ENCODE measurements at regions of chr12 and their contacts with region 1.

Region 1: GRCh38 chr12:104339663-104340062 is 36.1 kb downstream of the EID3 start:
- DNase-seq: no peak
- ATAC-seq: peak; percentile 45
- H3K4me3 ChIP-seq: no peak overlapping the region
- H3K27ac ChIP-seq: peak overlapping the region; percentile 54 to 60
- H3K4me1 ChIP-seq: peaks cover 4 to 14% of the 10 kb centered on the region in 2 donors
- H3K27me3 ChIP-seq: no peaks in the 10 kb centered on the region

Region 2: DNA sequence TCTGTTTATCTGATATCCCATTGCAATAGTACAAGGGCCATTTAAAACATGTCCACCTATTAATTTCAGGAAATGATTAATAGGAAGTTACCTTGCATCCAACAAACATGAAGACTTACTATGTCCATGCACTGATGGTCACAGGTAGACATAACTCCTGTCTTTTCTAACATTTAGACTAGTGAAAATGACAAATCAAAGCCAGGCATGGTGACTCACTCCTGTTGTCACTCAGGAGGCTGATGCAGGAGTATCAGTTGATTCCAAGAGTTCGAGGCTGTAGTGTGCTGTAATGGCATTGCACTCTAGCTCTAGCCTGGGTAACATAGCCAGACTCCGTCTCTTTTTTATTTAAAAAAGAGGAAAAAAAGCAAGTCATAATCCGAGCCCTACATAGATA is 394.7 kb before region 1 on chr12:
- intact Hi-C with region 1: no loop called
- DNase-seq: no peak
- ATAC-seq: no peak
- H3K4me3 ChIP-seq: no peak overlapping the region
- H3K27ac ChIP-seq: no peak overlapping the region
- H3K4me1 ChIP-seq: no peaks in the 10 kb centered on the region
- H3K27me3 ChIP-seq: no peaks in the 10 kb centered on the region

Region 3: DNA sequence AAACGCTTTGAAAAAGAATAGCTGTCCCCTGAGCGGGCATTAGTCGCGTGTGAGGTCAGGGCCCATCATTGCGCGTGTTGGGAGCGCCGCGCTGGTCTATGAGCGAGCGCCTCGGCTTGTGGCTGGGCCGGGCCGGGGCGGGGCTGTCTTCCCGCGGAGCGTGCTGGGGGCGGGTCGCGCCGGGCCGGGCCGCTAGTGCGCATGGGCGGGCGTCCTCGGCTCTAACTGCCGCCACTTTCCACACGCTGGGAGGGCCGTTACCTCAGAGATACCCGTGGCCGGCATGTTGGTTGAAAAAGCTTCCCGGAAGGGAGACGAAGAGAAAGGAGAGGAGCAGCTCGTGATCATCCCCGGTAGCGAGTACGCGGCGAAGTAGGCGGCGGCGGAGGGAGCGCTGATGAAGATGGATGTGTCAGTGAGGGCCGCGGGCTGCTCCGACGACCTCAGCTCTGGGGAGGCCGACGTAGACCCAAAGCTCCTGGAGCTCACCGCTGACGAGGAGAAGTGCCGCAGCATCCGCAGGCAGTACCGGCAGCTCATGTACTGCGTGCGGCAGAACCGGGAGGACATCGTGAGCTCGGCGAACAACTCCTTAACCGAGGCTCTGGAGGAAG is 36.0 kb before region 1 on chr12 and contains the start of gene EID3:
- intact Hi-C with region 1: loop called (anchors 5 kb)
- DNase-seq: peak; percentile 95 to 98
- ATAC-seq: peak; percentile 98
- H3K4me3 ChIP-seq: peak within 1 kb of the TSS; percentile 17 to 26
- H3K27ac ChIP-seq: peak within 1 kb of the TSS; percentile 38 to 79
- H3K4me1 ChIP-seq: peaks cover 5 to 12% of the 10 kb centered on the region in 2 donors
- H3K27me3 ChIP-seq: no peaks in the 10 kb centered on the region
- total RNA-seq, gene EID3: 8.5 to 8.6 TPM

Region 4: GRCh38 chr12:104427011-104427461 is 87.4 kb after region 1 on chr12:
- intact Hi-C with region 1: no loop called
- DNase-seq: no peak
- ATAC-seq: no peak
- H3K4me3 ChIP-seq: no peak overlapping the region
- H3K27ac ChIP-seq: no peak overlapping the region
- H3K4me1 ChIP-seq: peaks cover 3 to 6% of the 10 kb centered on the region in 2 donors
- H3K27me3 ChIP-seq: no peaks in the 10 kb centered on the region

Measured in aorta (tissue), 5 donors.